ENCODE measurements at regions of chr6 and their contacts with region 1.

Region 1: GRCh38 chr6:1396952-1397868 is 7.8 kb downstream of the FOXF2 start:
- DNase-seq: peak in 8 of 10 donors; percentile 45 to 79 (median 62)
- H3K4me3 ChIP-seq: peak overlapping the region in 15 of 59 donors; percentile 4 to 36 (median 25)
- H3K27ac ChIP-seq: peak overlapping the region in 29 of 59 donors; percentile 2 to 82 (median 43)
- H3K27me3 ChIP-seq: peaks cover 0 to 76% (median 60%) of the 10 kb centered on the region in 45 donors
- CTCF ChIP-seq: peak; percentile 86 to 97 (median 92)

Region 2: GRCh38 chr6:593139-593906 is 803.9 kb before region 1 on chr6:
- intact Hi-C with region 1: loop called in 1 of 2 experiments (anchors 5 kb)
- DNase-seq: peak in 4 of 10 donors; percentile 36 to 69 (median 48)
- H3K4me3 ChIP-seq: no peak overlapping the region
- H3K27ac ChIP-seq: no peak overlapping the region
- H3K27me3 ChIP-seq: no peaks in the 10 kb centered on the region
- CTCF ChIP-seq: peak; percentile 65 to 96 (median 83)

Region 3: DNA sequence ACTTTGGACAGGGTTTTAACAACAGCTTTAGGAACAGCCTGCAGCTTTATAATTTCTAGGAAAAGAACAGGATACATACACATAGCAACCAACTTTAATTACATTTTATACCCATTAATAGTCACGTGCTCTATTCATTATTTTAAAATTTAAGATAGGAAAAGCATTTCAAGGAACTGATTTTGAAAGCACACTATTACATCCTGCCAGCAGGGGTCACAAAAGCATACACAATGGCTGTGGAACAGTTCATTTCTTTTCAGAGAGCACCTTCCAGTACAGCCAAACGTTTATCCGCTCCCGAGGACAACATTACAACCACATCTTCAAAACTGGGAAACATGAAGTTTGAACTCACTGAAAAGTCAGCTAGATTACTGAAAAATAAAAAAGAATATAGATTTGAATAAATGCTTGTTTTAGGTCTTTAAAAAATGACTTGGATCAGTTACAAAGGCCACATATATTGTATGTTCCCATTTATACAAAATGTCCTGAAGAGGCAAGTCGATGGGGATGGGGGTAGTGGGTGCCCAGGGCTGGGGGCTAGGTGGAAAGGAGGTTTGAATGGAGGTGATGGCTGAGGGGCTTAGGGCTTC is 599.6 kb before region 1 on chr6:
- intact Hi-C with region 1: loop called in 1 of 2 experiments (anchors 5 kb)
- DNase-seq: peak in 3 of 10 donors; percentile 27 to 59 (median 31)
- H3K4me3 ChIP-seq: no peak overlapping the region
- H3K27ac ChIP-seq: no peak overlapping the region
- H3K27me3 ChIP-seq: peaks cover 0 to 39% (median 0%) of the 10 kb centered on the region in 45 donors
- CTCF ChIP-seq: peak; percentile 54 to 95 (median 86)

Region 4: DNA sequence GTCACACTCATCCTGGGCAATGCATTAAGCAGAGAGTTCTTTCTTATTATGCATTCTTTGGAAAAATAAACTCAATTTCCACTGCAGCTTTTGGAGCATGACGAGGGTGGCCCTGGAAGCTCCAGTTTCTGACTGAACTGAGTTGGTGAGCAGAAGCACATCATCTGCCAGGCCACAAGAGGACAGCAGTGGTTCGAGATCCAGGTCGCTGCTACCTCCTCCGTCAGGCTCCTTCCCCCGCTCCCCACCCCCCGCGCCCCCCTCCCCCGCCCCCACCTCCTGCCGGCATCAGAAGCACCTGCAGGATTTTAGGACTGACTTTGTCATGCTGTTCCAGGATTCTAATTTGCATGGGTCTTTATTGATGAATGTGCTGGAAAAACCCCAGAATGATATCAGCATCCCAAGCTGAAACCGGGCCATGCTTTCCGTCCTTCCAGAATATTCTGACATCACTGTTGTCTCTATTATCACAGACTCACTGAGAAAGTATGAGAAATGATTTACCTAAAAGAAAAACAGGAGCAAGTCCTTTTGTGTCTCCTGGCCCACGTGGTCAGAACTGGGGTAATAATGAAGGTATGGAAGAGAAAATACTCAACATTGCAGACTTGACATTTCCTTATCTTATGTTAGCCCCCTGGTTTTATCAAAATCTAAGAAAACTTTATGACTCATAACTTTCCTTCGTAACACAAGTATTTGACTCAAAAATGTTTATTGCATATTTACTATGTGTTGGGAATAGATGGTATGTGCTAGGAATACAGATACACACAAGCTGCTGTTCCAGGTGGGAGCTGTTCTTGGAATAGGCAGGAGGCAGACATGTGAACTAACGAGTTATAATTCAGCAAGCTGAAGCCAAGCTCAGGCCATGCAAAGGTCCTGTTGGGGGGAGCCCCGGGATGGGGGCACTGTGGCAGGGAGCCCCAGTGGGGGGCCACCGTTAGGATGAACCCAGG is 484.1 kb before region 1 on chr6:
- intact Hi-C with region 1: loop called in 1 of 2 experiments (anchors 5 kb)
- DNase-seq: peak in 1 of 10 donors; percentile 17
- H3K4me3 ChIP-seq: no peak overlapping the region
- H3K27ac ChIP-seq: no peak overlapping the region
- H3K27me3 ChIP-seq: peaks cover 0 to 50% (median 4%) of the 10 kb centered on the region in 45 donors
- CTCF ChIP-seq: peak in 50 of 56 donors; percentile 15 to 65 (median 48)